Sigmoid colon (tissue), 7 donors: ENCODE measurements at regions of chr12 and their contacts with region 1.

Region 1: DNA sequence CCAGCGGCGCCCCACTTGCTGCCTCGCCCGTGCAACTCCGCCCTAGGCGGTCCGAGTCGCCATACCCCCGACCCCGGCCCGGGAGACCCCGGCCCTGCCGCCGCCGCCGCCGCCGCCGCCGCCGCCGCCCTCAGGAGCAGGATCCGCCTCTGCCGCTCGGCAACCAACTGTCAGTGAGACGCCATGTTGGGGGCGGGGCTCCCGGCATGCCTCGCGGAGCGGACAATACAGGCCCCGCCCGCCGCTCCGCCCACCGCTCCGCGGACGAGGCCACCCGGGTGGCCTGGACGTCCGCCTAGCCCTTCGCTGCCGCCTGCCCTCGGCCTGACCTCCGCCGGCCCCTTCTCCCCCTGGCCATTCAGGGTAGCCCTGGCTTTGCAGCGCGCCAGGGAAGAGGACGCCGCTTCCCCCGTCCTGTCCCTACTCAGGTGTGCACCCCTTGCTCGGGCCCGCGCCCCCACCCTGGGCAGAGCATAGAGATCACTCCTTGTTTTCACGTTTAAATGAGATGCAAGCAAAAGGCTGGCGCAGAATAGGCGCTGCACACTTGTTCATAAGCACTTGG is at the start of gene HECTD4:
- DNase-seq: peak; percentile 95
- H3K4me3 ChIP-seq: peak within 1 kb of the TSS; percentile 79 to 99 (median 86)
- H3K27ac ChIP-seq: peak within 1 kb of the TSS; percentile 84 to 94 (median 87)
- H3K4me1 ChIP-seq: peaks cover 0 to 32% (median 32%) of the 10 kb centered on the region in 4 donors
- H3K27me3 ChIP-seq: no peaks in the 10 kb centered on the region
- CTCF ChIP-seq: no peak
- EP300 ChIP-seq: no peak
- POLR2A ChIP-seq: peak; percentile 5 to 67
- total RNA-seq, gene HECTD4: 26.0 to 64.8 (median 37.0) TPM

Region 2: GRCh38 chr12:111942557-111942956 is 439.8 kb before region 1 on chr12:
- intact Hi-C with region 1: loop called (anchors 5 kb)
- DNase-seq: no peak
- H3K4me3 ChIP-seq: no peak overlapping the region
- H3K27ac ChIP-seq: peak overlapping the region in 3 of 4 donors; percentile 3 to 50 (median 43)
- H3K4me1 ChIP-seq: peaks cover 0 to 19% (median 14%) of the 10 kb centered on the region in 4 donors
- H3K27me3 ChIP-seq: no peaks in the 10 kb centered on the region
- CTCF ChIP-seq: no peak
- EP300 ChIP-seq: no peak
- POLR2A ChIP-seq: no peak

Region 3: GRCh38 chr12:112125250-112125999 is 256.9 kb before region 1 on chr12 and contains the start of gene TRAFD1:
- intact Hi-C with region 1: loop called (anchors 10 kb)
- DNase-seq: peak; percentile 99
- H3K4me3 ChIP-seq: peak within 1 kb of the TSS; percentile 80 to 94 (median 94)
- H3K27ac ChIP-seq: peak within 1 kb of the TSS; percentile 96 to 99 (median 98)
- H3K4me1 ChIP-seq: peaks cover 0 to 81% (median 65%) of the 10 kb centered on the region in 4 donors
- H3K27me3 ChIP-seq: no peaks in the 10 kb centered on the region
- CTCF ChIP-seq: no peak
- EP300 ChIP-seq: peak in 1 of 4 donors; percentile 1
- POLR2A ChIP-seq: peak; percentile 96 to 98
- total RNA-seq, gene TRAFD1: 42.1 to 90.8 (median 74.7) TPM

Region 4: DNA sequence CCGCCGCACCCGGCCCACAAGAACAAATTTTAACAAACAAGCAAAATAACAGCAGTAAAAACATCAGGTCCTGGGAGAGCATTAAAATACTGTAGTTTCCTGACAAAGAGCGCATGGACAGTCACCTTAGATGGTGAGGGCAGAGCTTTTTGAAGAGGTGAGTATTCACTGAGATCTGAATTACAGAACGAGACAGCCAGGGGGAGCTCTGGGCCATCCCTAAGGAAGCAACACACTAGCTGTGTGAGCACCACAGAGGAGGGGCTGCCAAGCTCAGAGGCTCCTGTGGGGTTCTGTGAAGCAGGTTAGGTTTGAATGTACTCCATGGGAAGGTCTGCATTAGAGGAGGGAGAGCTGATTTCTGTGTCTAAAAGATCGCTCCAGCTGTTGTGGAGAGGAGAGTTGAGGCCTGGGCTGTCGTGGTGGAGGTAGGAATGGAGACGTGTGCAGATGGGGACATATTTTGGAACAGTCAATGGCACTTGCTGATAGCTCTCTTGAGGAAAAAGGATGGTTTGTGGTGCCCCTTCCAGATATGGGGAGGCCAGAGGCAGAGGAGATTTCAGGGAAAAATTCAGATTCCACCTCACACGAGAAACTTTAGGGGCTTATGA is 184.1 kb before region 1 on chr12:
- intact Hi-C with region 1: loop called (anchors 2 kb)
- DNase-seq: no peak
- H3K4me3 ChIP-seq: no peak overlapping the region
- H3K27ac ChIP-seq: no peak overlapping the region
- H3K4me1 ChIP-seq: no peaks in the 10 kb centered on the region
- H3K27me3 ChIP-seq: no peaks in the 10 kb centered on the region
- CTCF ChIP-seq: peak in 3 of 4 experiments; percentile 19 to 43 (median 42)
- EP300 ChIP-seq: no peak
- POLR2A ChIP-seq: no peak

Region 5: DNA sequence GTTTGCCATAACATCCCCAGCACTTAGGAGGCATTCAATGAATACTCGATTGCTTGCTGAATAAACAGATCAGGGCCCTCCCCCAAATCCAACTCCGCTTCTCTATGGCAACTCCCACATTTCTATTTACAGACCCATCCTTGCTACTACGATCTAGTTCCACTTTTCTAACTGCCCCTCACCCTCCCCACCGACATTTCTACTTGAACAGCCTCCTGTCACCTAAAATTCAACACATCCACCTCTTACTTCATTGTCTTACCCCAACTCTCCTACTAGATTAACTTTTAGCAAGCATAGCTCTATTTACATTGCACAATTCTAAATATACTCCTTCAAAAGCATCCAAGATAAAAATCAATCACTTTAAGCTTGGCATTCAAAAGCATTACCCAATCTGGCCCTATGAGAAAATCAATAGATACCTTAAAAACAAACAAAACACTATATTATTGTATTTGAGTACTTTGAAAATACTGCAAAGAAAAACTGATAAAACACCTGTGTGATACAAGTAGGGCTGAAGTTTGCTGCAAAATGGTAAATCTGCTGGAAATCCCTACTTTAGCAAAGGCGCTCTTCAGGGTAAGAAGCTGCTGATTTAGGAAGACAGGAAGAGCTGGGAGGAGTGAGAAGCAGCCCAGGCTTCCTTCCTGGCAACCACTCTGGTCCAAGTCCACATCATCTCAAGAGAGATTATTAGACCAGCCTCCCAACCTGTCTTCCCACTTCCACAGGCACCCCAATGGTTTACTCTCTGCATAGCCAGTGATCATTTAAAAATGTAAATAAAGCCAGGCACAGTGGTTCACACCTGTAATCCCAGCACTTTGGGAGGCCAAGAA is 96.5 kb before region 1 on chr12:
- intact Hi-C with region 1: loop called (anchors 5 kb)
- DNase-seq: no peak
- H3K4me3 ChIP-seq: no peak overlapping the region
- H3K27ac ChIP-seq: no peak overlapping the region
- H3K4me1 ChIP-seq: peaks cover 0 to 16% (median 12%) of the 10 kb centered on the region in 4 donors
- H3K27me3 ChIP-seq: no peaks in the 10 kb centered on the region
- CTCF ChIP-seq: no peak
- EP300 ChIP-seq: no peak
- POLR2A ChIP-seq: no peak

Region 6: GRCh38 chr12:112314981-112315380 is 67.3 kb before region 1 on chr12:
- intact Hi-C with region 1: loop called (anchors 5 kb)
- DNase-seq: no peak
- H3K4me3 ChIP-seq: no peak overlapping the region
- H3K27ac ChIP-seq: no peak overlapping the region
- H3K4me1 ChIP-seq: peaks cover 0 to 6% (median 2%) of the 10 kb centered on the region in 4 donors
- H3K27me3 ChIP-seq: no peaks in the 10 kb centered on the region
- CTCF ChIP-seq: no peak
- EP300 ChIP-seq: no peak
- POLR2A ChIP-seq: no peak

Region 7: GRCh38 chr12:112347581-112347982 is 34.7 kb before region 1 on chr12:
- intact Hi-C with region 1: no loop called
- DNase-seq: no peak
- H3K4me3 ChIP-seq: no peak overlapping the region
- H3K27ac ChIP-seq: no peak overlapping the region
- H3K4me1 ChIP-seq: peaks cover 0 to 74% (median 25%) of the 10 kb centered on the region in 4 donors
- H3K27me3 ChIP-seq: no peaks in the 10 kb centered on the region
- CTCF ChIP-seq: no peak
- EP300 ChIP-seq: no peak
- POLR2A ChIP-seq: no peak